ENCODE measurements at regions of chr18 and their contacts with region 1.

Region 1: GRCh38 chr18:8478166-8478967 is 130.9 kb upstream of the RAB12 start:
- DNase-seq: peak; percentile 54 to 64
- ATAC-seq: peak in 7 of 8 donors; percentile 43 to 74 (median 59)
- H3K4me3 ChIP-seq: no peak overlapping the region
- H3K27ac ChIP-seq: no peak overlapping the region
- H3K4me1 ChIP-seq: peaks cover 0 to 9% (median 0%) of the 10 kb centered on the region in 9 donors
- H3K27me3 ChIP-seq: no peaks in the 10 kb centered on the region
- CTCF ChIP-seq: peak; percentile 61 to 78 (median 72)

Region 2: GRCh38 chr18:7221424-7222155 is 1256.8 kb before region 1 on chr18:
- intact Hi-C with region 1: loop called in 2 of 10 experiments (anchors 5 kb)
- DNase-seq: peak in 1 of 2 donors; percentile 55
- ATAC-seq: peak; percentile 72 to 96 (median 90)
- H3K4me3 ChIP-seq: no peak overlapping the region
- H3K27ac ChIP-seq: no peak overlapping the region
- H3K4me1 ChIP-seq: no peaks in the 10 kb centered on the region
- H3K27me3 ChIP-seq: no peaks in the 10 kb centered on the region
- CTCF ChIP-seq: peak; percentile 68 to 88 (median 74)

Region 3: DNA sequence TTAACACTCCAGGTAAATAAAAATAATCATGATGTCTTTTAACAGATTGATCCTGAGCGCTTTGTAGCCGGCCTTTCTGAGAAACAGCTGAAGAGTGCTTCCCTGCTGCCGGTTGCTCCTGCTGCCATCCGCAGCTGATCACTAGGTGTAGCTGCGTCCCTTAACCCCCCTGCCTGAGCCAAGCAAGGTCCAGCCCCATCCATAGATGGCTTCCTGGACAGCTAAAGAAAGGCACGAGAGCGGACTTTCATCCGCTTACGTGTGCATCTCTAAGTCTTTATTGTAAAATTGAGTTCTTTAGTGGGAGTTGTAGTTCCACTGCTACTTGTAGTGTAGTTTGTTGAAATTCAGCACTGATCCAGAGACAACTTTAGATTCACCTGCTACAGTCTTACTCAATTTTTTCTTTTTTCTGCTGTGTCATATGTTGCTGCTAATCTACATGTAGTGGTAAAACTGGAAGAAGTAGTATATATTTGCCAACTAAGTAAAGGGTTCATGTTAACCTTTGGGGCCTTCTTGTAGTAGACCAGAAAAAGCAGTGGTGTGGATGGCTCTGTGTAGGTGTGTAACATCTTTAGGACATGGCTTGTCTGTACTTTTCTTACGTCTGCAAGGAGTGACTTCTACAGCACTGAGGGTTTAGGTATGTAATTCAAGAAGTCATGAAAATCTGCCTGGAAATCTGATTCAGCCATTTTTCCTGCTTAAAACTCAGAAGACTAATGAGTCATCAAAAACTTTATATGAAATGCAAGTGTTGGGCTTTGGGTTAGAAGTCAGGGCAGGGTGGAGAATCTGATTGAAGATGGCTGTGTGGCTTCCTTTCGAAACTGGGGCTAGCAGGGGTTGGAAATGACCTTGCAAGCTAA is 903.0 kb before region 1 on chr18:
- intact Hi-C with region 1: loop called in 1 of 10 experiments (anchors 10 kb)
- DNase-seq: no peak
- ATAC-seq: peak in 7 of 8 donors; percentile 58 to 83 (median 76)
- H3K4me3 ChIP-seq: no peak overlapping the region
- H3K27ac ChIP-seq: peak overlapping the region in 2 of 10 donors; percentile 17 to 28
- H3K4me1 ChIP-seq: peaks cover 5 to 96% (median 68%) of the 10 kb centered on the region in 9 donors
- H3K27me3 ChIP-seq: peaks cover 0 to 4% (median 0%) of the 10 kb centered on the region in 7 donors
- CTCF ChIP-seq: peak in 7 of 9 donors; percentile 5 to 47 (median 25)

Region 4: DNA sequence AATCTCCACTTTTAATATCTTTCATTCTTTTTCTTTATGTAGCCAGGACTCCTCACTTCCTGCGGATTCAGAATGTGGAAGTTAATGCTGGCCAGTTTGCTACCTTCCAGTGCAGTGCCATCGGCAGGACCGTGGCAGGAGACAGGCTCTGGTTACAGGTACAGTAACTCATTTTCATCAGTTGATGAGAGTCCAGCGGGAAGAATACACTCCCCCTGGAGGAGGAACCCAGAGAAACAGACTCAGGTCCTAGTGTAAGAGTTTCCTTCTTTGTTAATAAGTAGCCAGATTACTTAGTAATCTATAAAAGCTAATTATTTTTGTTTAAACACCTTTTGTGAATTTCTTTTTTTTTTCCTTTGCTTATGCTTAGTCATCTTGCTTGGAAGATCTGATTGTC is 551.8 kb before region 1 on chr18:
- intact Hi-C with region 1: loop called in 1 of 10 experiments (anchors 10 kb)
- DNase-seq: no peak
- ATAC-seq: no peak
- H3K4me3 ChIP-seq: no peak overlapping the region
- H3K27ac ChIP-seq: no peak overlapping the region
- H3K4me1 ChIP-seq: peaks cover 0 to 66% (median 36%) of the 10 kb centered on the region in 9 donors
- H3K27me3 ChIP-seq: no peaks in the 10 kb centered on the region
- CTCF ChIP-seq: peak in 3 of 9 donors; percentile 13 to 26 (median 22)

Region 5: DNA sequence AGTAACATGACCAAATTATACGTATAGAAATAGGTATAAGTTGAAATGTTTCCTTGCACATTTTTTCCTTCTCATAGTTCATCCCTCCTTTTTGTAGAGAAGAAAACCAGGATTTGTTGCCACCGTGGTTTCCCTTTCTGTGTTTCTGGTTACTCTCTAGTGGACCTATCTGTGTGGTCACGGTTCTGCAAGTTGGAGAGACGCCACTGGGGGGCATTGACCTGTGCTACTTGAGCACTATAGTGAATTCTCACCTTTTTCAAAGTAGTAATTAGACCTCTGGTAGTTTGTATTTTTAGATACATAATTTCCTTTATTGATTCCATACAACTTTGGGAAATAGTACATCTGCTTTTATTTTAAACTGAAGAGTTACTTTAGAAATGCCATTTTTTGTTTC is 466.5 kb before region 1 on chr18:
- intact Hi-C with region 1: no loop called
- DNase-seq: no peak
- ATAC-seq: no peak
- H3K4me3 ChIP-seq: no peak overlapping the region
- H3K27ac ChIP-seq: no peak overlapping the region
- H3K4me1 ChIP-seq: peaks cover 0 to 16% (median 0%) of the 10 kb centered on the region in 9 donors
- H3K27me3 ChIP-seq: no peaks in the 10 kb centered on the region
- CTCF ChIP-seq: no peak

Region 6: DNA sequence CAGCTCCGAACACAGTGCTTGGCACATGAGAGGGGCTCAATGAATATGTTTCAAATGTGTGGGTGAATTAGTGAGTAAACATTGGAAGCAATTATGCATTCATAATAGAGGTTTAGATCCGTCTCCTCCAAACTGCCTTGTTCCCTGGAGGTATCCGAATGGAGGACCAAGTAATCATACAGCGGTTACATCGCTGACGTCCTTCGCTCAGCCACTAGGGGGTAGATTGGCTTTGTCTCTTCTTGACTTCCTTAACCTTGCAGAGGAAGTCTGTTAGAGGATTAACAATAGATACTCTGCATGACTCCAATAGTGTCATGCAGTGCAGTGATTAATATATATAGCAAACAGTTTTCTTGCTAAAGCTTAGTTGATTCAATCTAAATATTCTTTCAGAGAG is 394.2 kb before region 1 on chr18:
- intact Hi-C with region 1: loop called in 1 of 10 experiments (anchors 10 kb)
- DNase-seq: peak; percentile 19 to 32
- ATAC-seq: peak in 7 of 8 donors; percentile 69 to 89 (median 76)
- H3K4me3 ChIP-seq: no peak overlapping the region
- H3K27ac ChIP-seq: no peak overlapping the region
- H3K4me1 ChIP-seq: peaks cover 0 to 28% (median 3%) of the 10 kb centered on the region in 9 donors
- H3K27me3 ChIP-seq: no peaks in the 10 kb centered on the region
- CTCF ChIP-seq: peak; percentile 32 to 75 (median 61)

Region 7: GRCh38 chr18:8367217-8367988 is 111.0 kb before region 1 on chr18:
- intact Hi-C with region 1: loop called in 2 of 10 experiments (anchors 10 kb)
- DNase-seq: peak; percentile 11 to 38
- ATAC-seq: peak; percentile 34 to 70 (median 60)
- H3K4me3 ChIP-seq: peak overlapping the region in 9 of 10 donors; percentile 4 to 50 (median 44)
- H3K27ac ChIP-seq: no peak overlapping the region
- H3K4me1 ChIP-seq: peaks cover 0 to 36% (median 23%) of the 10 kb centered on the region in 9 donors
- H3K27me3 ChIP-seq: peaks cover 0 to 15% (median 0%) of the 10 kb centered on the region in 7 donors
- CTCF ChIP-seq: peak; percentile 25 to 73 (median 50)